ENCODE measurements at regions of chr7 and their contacts with region 1.

Region 1: DNA sequence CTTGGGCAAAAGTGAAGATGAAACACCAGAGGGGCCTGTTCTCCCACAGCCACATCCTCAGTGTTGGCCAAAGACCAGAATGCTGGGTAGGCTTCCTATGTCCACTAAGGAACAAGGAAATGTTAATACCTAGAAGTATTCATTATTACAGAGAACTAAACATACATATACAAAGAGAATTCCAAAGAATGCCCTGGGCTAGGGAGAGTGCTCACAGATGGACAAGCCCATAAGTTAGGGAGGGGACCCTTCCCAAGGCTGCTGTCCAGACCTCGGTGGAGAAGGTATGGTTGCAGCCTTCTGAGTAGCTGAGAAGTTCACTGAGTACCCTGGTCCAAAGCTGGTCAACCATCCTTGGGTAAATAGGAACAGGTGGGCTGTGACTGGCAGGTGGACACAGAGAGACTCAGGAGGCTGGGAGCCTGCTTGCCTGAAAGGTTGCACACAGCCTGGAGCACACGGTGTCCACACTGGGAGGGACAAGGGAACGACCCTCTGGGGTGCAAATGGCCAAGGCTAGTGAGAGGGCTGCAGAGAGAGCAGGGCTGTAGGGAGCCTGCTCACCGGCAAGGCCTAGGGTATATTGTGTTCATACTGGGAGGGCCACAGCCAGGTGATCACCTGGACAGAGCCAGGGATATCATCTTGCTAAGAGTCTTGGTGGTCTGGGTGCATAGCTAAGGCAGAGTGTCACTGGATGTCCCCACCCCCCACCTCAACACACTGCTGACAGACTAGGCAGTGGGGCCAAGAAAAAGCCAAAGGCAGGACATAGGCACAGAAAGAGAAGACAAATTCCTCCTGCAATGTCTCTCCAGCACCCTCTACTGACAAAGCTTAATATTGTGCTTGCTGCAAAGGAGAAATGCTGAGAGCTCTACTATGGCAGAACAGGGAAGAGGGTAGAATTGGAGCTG is 40.3 kb downstream of the CPVL start:
- DNase-seq: peak; percentile 37
- H3K4me3 Mint-ChIP-seq: no peak overlapping the region
- H3K27ac Mint-ChIP-seq: no peak overlapping the region
- H3K4me1 Mint-ChIP-seq: peaks cover 5% of the 10 kb centered on the region
- H3K27me3 Mint-ChIP-seq: peaks cover 6% of the 10 kb centered on the region

Region 2: GRCh38 chr7:28955718-28956619 is 150.0 kb before region 1 on chr7:
- CTCF ChIA-PET with region 1: interaction called, 18 read pairs
- intact Hi-C with region 1: loop called (anchors 1 kb)
- DNase-seq: peak; percentile 50
- H3K4me3 Mint-ChIP-seq: no peak overlapping the region
- H3K27ac Mint-ChIP-seq: no peak overlapping the region
- H3K4me1 Mint-ChIP-seq: peaks cover 10% of the 10 kb centered on the region
- H3K27me3 Mint-ChIP-seq: peaks cover 50% of the 10 kb centered on the region

Region 3: GRCh38 chr7:29035044-29035740 is 70.8 kb before region 1 on chr7:
- CTCF ChIA-PET with region 1: no interaction called
- intact Hi-C with region 1: loop called (anchors 2 kb)
- DNase-seq: peak; percentile 33
- H3K4me3 Mint-ChIP-seq: no peak overlapping the region
- H3K27ac Mint-ChIP-seq: no peak overlapping the region
- H3K4me1 Mint-ChIP-seq: peaks cover 9% of the 10 kb centered on the region
- H3K27me3 Mint-ChIP-seq: no peaks in the 10 kb centered on the region

Region 4: DNA sequence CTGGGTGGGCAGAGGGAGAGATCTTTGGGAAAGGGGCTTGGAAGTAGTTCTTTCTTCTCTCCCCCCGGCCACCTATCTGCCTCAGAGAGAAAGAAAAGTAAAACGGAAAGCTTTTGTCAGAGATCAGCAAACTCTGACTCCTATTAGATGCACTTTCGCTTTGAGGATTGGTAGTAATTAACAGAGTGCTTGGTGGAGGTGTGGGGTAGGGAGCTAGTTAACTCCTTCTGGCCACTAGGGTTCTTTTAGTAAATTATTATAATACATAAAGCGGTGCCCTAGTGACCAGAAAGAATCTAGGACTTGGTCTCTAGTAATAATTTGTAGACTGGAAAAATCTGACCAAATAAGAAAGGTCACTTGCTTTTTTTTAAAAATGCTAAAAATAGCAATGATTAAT is 14.3 kb before region 1 on chr7:
- CTCF ChIA-PET with region 1: interaction called, 15 read pairs
- intact Hi-C with region 1: no loop called
- DNase-seq: peak; percentile 21
- H3K4me3 Mint-ChIP-seq: peak overlapping the region; percentile 78
- H3K27ac Mint-ChIP-seq: peak overlapping the region; percentile 86
- H3K4me1 Mint-ChIP-seq: peaks cover 13% of the 10 kb centered on the region
- H3K27me3 Mint-ChIP-seq: peaks cover 3% of the 10 kb centered on the region

Region 5: GRCh38 chr7:29116361-29117200 is 10.6 kb after region 1 on chr7:
- CTCF ChIA-PET with region 1: interaction called, 10 read pairs
- intact Hi-C with region 1: no loop called
- DNase-seq: no peak
- H3K4me3 Mint-ChIP-seq: no peak overlapping the region
- H3K27ac Mint-ChIP-seq: no peak overlapping the region
- H3K4me1 Mint-ChIP-seq: peaks cover 7% of the 10 kb centered on the region
- H3K27me3 Mint-ChIP-seq: peaks cover 10% of the 10 kb centered on the region

Region 6: DNA sequence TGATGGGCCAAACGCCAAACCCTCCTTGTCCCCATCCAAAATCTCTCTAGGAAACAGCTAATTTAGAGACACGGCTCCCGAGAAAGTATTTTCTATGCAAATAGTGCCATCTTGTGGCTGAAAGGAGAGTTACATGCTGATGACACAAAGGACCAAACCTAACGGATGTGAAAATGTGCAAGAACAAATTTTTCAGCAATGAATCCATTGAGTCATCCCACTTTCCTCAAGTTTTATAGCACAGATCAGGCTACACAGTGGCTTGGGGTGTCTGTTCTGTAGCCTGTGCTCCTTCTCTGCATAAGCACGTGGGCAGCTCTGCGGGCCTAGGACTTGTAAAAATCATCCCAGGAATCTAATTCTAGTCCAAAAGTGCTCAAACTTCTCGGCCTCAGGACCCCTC is 302.8 kb after region 1 on chr7:
- CTCF ChIA-PET with region 1: interaction called, 8 read pairs
- intact Hi-C with region 1: loop called (anchors 2 kb)
- DNase-seq: peak; percentile 70
- H3K4me3 Mint-ChIP-seq: no peak overlapping the region
- H3K27ac Mint-ChIP-seq: no peak overlapping the region
- H3K4me1 Mint-ChIP-seq: no peaks in the 10 kb centered on the region
- H3K27me3 Mint-ChIP-seq: no peaks in the 10 kb centered on the region